ENCODE measurements at regions of chr2 and their contacts with region 1.

Region 1: GRCh38 chr2:121974897-121975661 is 219.6 kb downstream of the TSN start:
- DNase-seq: peak in 1 of 2 donors; percentile 20
- ATAC-seq: peak; percentile 74 to 87
- H3K4me3 ChIP-seq: peak overlapping the region; percentile 40 to 62 (median 44)
- H3K27ac ChIP-seq: no peak overlapping the region
- H3K4me1 ChIP-seq: no peaks in the 10 kb centered on the region
- H3K27me3 ChIP-seq: no peaks in the 10 kb centered on the region
- CTCF ChIP-seq: peak; percentile 11 to 52 (median 43)
- POLR2A ChIP-seq: no peak

Region 2: GRCh38 chr2:121810959-121811853 is 163.9 kb before region 1 on chr2:
- in situ Hi-C with region 1: no loop called
- intact Hi-C with region 1: loop called (anchors 10 kb)
- DNase-seq: peak; percentile 15 to 28
- ATAC-seq: peak; percentile 74 to 80
- H3K4me3 ChIP-seq: no peak overlapping the region
- H3K27ac ChIP-seq: no peak overlapping the region
- H3K4me1 ChIP-seq: peaks cover 6 to 10% of the 10 kb centered on the region in 2 donors
- H3K27me3 ChIP-seq: no peaks in the 10 kb centered on the region
- CTCF ChIP-seq: peak in 4 of 5 experiments; percentile 14 to 61 (median 48)
- POLR2A ChIP-seq: no peak

Region 3: GRCh38 chr2:122055521-122055931 is 80.4 kb after region 1 on chr2:
- in situ Hi-C with region 1: no loop called
- intact Hi-C with region 1: no loop called
- DNase-seq: no peak
- ATAC-seq: no peak
- H3K4me3 ChIP-seq: no peak overlapping the region
- H3K27ac ChIP-seq: no peak overlapping the region
- H3K4me1 ChIP-seq: no peaks in the 10 kb centered on the region
- H3K27me3 ChIP-seq: no peaks in the 10 kb centered on the region
- CTCF ChIP-seq: no peak
- POLR2A ChIP-seq: no peak

Region 4: GRCh38 chr2:122179492-122180165 is 204.6 kb after region 1 on chr2:
- in situ Hi-C with region 1: no loop called
- intact Hi-C with region 1: no loop called
- DNase-seq: no peak
- ATAC-seq: no peak
- H3K4me3 ChIP-seq: no peak overlapping the region
- H3K27ac ChIP-seq: no peak overlapping the region
- H3K4me1 ChIP-seq: no peaks in the 10 kb centered on the region
- H3K27me3 ChIP-seq: no peaks in the 10 kb centered on the region
- CTCF ChIP-seq: no peak
- POLR2A ChIP-seq: no peak

Region 5: DNA sequence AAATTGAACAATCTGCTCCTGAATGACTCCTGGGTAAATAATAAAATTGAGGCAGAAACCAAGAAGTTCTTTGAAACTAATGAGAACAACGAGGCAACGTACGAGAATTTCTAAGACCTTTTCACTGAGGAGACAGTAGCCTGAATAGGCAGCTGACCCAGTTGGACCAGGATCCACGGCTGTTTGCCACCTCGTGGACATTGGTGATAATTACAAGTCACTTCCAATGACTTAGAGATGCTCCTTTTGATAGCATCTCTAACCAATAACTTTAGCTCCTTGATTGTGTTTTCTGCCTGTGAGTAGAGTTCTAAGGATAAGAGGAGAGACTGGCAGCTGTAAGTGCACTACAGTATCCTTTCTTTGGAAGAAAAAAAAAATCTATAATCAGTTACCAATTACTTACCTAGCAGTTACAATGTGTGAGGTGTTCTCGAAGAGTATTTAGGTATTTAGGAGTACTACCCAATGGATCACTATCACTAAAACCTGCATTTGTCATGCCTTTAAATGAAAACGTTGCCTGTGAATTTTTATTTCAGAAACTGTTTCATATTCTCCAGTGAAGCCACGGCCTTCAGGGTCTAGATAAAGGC is 2018.7 kb after region 1 on chr2:
- in situ Hi-C with region 1: loop called in 1 of 4 experiments (anchors 25 kb)
- intact Hi-C with region 1: no loop called
- DNase-seq: no peak
- ATAC-seq: no peak
- H3K4me3 ChIP-seq: no peak overlapping the region
- H3K27ac ChIP-seq: no peak overlapping the region
- H3K4me1 ChIP-seq: no peaks in the 10 kb centered on the region
- H3K27me3 ChIP-seq: no peaks in the 10 kb centered on the region
- CTCF ChIP-seq: peak in 1 of 5 experiments; percentile 10
- POLR2A ChIP-seq: no peak

Measured in gastrocnemius medialis (tissue), 4 donors.